Caco-2 (cell line): ENCODE measurements at regions of chr19 and their contacts with region 1.

Region 1: DNA sequence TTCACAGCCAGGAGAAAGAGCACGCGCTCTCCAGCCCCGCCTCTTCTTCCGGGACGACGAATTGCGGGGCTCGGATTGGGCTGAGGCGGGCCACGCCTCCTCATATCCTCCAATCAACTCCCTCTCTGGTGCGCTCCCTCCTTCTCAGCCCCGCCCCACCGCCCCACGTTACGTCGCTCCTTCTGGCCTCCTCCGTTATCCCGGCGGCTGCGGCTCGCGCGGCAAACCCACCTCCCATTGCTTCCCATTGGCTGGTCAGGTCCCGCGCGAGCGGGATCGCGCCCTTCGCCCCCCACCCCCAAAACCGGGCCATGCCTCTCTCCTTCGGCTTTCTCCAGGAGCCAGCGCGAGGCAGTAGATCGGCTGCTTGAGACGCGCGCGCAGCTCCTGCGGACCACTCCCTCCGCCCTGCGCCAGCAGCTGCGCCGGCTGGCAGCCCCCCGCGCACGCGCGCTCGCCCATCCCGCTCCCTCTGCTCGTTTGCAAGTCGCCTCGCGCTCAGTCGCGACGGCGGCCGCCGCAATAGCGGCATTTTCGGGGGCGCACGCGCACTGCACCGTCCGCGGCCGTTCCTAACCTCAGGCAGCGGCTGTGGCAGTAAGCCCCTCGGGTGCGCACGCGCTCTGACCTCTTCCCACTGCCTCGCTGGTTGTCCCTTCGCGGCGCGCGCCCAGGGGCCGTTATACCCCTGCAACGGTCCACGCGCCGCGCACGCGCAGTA is 512 bp upstream of the ARHGAP35 start:
- DNase-seq: peak; percentile 99 to 100
- H3K4me3 ChIP-seq: peak overlapping the region; percentile 90
- H3K4me3 Mint-ChIP-seq: no peak overlapping the region
- H3K27ac Mint-ChIP-seq: peak overlapping the region; percentile 74
- H3K4me1 ChIP-seq: peaks cover 32% of the 10 kb centered on the region
- H3K4me1 Mint-ChIP-seq: peaks cover 10% of the 10 kb centered on the region
- H3K27me3 ChIP-seq: no peaks in the 10 kb centered on the region
- H3K27me3 Mint-ChIP-seq: no peaks in the 10 kb centered on the region
- CTCF ChIP-seq: no peak

Region 2: GRCh38 chr19:46890423-46891170 is 30.3 kb after region 1 on chr19:
- CTCF ChIA-PET with region 1: interaction called, 5 read pairs
- POLR2A ChIA-PET with region 1: interaction called, 8 read pairs
- intact Hi-C with region 1: loop called (anchors 1 kb)
- DNase-seq: peak; percentile 86 to 90
- H3K4me3 ChIP-seq: no peak overlapping the region
- H3K4me3 Mint-ChIP-seq: peak overlapping the region; percentile 63
- H3K27ac Mint-ChIP-seq: peak overlapping the region; percentile 90
- H3K4me1 ChIP-seq: peaks cover 42% of the 10 kb centered on the region
- H3K4me1 Mint-ChIP-seq: peaks cover 52% of the 10 kb centered on the region
- H3K27me3 ChIP-seq: no peaks in the 10 kb centered on the region
- H3K27me3 Mint-ChIP-seq: no peaks in the 10 kb centered on the region
- CTCF ChIP-seq: peak in 1 of 2 experiments; percentile 29

Region 3: GRCh38 chr19:46913852-46914430 is 53.7 kb after region 1 on chr19:
- CTCF ChIA-PET with region 1: no interaction called
- POLR2A ChIA-PET with region 1: no interaction called
- intact Hi-C with region 1: loop called (anchors 2 kb)
- DNase-seq: no peak
- H3K4me3 ChIP-seq: no peak overlapping the region
- H3K4me3 Mint-ChIP-seq: peak overlapping the region; percentile 60
- H3K27ac Mint-ChIP-seq: peak overlapping the region; percentile 34
- H3K4me1 ChIP-seq: peaks cover 38% of the 10 kb centered on the region
- H3K4me1 Mint-ChIP-seq: peaks cover 36% of the 10 kb centered on the region
- H3K27me3 ChIP-seq: no peaks in the 10 kb centered on the region
- H3K27me3 Mint-ChIP-seq: no peaks in the 10 kb centered on the region
- CTCF ChIP-seq: no peak

Region 4: DNA sequence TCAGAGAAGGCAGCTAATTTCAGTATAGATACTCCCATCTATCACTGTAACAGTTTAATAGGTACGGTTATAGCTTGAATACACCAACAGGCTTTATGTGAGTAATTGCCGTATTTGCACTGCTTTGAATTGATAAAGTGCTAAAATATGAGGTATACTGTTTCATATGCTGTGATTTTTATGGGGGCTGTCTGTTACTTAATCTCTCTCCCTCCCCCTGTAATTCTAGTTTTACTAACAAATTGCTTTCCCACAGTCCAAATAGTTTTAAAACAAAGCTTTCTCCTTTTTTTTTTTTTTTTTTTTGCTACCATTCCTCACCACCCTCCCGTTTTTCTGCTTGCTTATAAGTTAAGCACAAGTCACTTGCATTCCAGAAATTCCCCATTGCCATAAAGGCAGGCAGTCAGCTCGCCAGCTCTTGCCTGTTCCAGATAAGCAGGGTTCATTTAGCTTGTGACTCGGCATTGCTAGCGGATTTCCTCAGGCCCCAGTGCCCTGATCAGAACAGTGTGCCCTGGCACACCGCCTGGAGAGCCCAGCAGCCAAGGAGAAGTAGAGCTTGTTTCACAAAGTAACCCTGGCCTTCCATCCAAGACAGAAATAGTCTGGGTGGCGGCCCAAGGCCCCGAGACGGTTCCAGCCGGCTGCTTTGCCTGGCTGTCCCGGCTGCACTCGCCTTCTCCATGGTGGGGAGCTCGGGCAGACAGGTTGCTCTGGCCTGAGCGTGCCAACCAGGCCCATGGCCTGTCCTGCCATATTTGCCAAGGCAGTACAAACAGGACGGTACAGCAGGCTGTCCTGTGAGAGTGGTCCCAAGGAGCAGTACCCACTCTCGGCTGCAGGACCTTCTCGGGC is 115.9 kb after region 1 on chr19:
- CTCF ChIA-PET with region 1: interaction called, 3 read pairs
- POLR2A ChIA-PET with region 1: no interaction called
- intact Hi-C with region 1: loop called (anchors 10 kb)
- DNase-seq: peak; percentile 68 to 86
- H3K4me3 ChIP-seq: no peak overlapping the region
- H3K4me3 Mint-ChIP-seq: peak overlapping the region; percentile 56
- H3K27ac Mint-ChIP-seq: peak overlapping the region; percentile 98
- H3K4me1 ChIP-seq: peaks cover 48% of the 10 kb centered on the region
- H3K4me1 Mint-ChIP-seq: peaks cover 40% of the 10 kb centered on the region
- H3K27me3 ChIP-seq: no peaks in the 10 kb centered on the region
- H3K27me3 Mint-ChIP-seq: no peaks in the 10 kb centered on the region
- CTCF ChIP-seq: no peak

Region 5: DNA sequence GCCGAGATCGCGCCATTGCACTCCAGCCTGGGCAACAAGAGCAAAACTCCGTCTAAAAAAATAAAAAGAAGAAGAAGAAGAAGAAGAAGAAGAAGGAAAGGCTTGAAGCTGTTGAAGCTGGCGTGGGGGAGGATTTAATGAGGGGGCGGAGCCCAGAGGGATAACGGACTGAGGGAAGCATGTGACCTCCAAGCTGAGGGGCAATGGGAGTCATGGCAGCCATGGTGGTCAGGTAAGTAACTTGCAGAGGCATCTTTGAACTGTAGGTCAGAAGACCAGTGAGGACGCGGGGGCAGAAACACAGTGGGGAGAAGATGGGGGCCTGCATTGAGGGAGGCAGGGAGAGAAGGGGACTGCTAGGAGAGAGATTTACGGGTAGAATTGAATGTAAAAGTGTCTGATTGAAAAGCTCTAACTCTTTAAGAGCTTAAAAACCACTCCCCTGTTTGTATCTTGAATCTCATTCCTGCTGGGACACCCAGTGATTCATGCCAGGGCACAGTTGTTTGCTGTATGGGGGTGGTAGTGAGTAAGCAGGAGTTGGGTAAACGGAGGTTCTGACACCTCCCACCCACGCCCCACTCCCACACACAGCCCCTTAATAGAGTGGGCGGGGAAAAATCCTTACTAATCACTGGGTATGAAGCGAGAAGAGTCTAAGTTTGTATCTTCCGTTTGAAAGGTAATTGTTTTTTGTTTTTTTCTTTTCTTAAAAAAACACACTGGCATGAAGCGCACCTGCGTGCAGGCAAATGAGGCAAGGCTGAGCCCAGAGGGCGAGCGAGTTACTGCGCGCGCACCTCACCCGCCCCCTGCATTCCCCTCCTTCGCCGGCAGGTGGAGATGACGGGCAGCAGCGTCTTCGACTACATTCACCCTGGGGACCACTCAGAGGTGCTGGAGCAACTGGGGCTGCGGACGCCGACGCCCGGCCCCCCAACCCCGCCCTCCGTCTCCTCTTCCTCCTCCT is 175.1 kb after region 1 on chr19:
- CTCF ChIA-PET with region 1: interaction called, 5 read pairs
- POLR2A ChIA-PET with region 1: no interaction called
- intact Hi-C with region 1: loop called (anchors 1 kb)
- DNase-seq: peak; percentile 89 to 98
- H3K4me3 ChIP-seq: peak overlapping the region; percentile 44
- H3K4me3 Mint-ChIP-seq: peak overlapping the region; percentile 79
- H3K27ac Mint-ChIP-seq: peak overlapping the region; percentile 50
- H3K4me1 ChIP-seq: peaks cover 5% of the 10 kb centered on the region; the same call in 1 of the 2 replicates
- H3K4me1 Mint-ChIP-seq: peaks cover 18% of the 10 kb centered on the region
- H3K27me3 ChIP-seq: no peaks in the 10 kb centered on the region
- H3K27me3 Mint-ChIP-seq: peaks cover 3% of the 10 kb centered on the region
- CTCF ChIP-seq: peak; percentile 94 to 98